Right ventricle myocardium superior (tissue), 1 donor: ENCODE measurements at regions of chr11 and their contacts with region 1.

Region 1: GRCh38 chr11:13955971-13956421 is 6.5 kb upstream of the SPON1 start:
- DNase-seq: no peak
- ATAC-seq: peak; percentile 82

Region 2: GRCh38 chr11:14148653-14149273 is 192.8 kb after region 1 on chr11:
- intact Hi-C with region 1: loop called (anchors 2 kb)
- DNase-seq: no peak
- ATAC-seq: peak; percentile 72